PC-9 (cell line): ENCODE measurements at regions of chr7 and their contacts with region 1.

Region 1: DNA sequence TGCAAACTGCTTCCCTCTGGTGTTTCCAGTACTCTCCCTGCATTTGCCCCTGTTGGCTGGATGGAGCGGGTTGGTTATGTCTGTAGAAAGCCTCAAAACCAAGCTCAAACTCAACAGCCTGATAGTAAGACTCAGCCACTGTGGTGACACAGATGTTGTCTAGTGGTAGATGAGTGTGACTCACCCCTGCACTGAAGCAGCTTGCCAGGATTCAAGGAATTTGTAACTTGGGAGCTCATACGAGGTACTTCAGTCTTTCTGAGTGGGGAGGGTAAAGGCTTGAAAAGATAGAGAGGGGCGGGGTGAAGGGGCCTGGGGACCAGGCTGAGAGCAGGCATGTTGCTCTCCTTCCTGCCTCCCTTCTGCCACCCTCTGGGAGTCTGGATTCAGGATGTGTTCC is 22.9 kb upstream of the AQP1 start:
- DNase-seq: peak; percentile 32 to 68
- H3K4me3 ChIP-seq: no peak overlapping the region
- H3K27ac ChIP-seq: no peak overlapping the region
- H3K4me1 ChIP-seq: peaks cover 3% of the 10 kb centered on the region; the same call in 1 of the 2 replicates
- H3K27me3 ChIP-seq: no peaks in the 10 kb centered on the region
- CTCF ChIP-seq: no peak

Region 2: DNA sequence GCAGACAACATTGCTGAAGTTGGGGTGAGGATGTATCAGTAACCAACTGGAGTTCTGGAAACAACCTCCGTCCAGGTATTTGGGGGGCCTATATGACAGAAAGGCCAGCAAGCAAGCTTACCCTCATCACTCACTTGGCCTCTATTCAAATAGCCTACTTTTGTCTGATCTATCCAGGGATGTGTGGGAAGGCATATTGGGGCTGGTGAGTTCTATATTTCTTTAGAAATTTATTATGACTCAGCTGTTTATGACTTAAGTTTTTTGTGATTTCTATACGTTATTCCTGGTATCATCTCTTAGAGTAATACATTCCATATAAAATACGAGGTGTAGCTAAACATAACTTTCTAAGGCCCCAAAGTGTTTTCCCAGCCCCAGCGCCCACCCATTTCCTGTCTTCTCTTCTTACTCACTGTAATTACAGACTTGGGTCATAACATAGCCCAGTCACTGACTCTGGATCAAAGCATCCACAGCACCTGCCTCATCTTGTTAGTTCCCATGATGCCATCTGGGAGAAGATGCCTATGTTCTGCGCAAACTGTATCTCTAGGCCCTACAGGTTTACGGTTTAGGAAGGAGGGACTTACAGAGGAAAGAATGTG is 276.0 kb before region 1 on chr7:
- CTCF ChIA-PET with region 1: no interaction called
- POLR2A ChIA-PET with region 1: no interaction called
- intact Hi-C with region 1: no loop called
- DNase-seq: no peak
- H3K4me3 ChIP-seq: no peak overlapping the region
- H3K27ac ChIP-seq: no peak overlapping the region
- H3K4me1 ChIP-seq: no peaks in the 10 kb centered on the region
- H3K27me3 ChIP-seq: no peaks in the 10 kb centered on the region
- CTCF ChIP-seq: no peak

Region 3: DNA sequence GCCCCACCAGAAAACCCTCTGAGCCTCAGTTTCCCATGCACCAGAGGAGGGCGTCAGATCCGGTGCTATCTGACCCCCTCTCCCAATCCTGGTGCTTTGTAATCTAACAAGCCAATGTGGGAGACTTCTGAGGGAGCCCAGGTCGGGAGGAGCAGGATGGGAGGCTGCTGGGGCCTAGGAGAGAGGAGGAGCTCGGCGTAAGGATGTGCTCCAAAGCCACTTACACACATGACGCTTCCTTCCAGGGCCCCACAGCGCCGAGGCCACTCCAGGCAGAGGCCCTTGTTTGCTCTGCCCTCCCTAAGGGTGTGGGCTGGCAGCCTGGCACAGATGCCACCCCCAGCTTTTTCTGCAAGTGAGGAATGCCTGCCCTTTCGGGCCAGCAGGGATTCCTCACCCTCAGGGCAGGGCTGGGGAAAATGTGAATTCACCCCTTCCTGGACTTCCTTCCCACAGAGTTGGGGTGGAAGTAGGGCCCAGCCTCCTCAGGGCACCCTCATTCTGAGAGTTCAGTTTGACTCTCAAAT is 17.2 kb after region 1 on chr7:
- CTCF ChIA-PET with region 1: no interaction called
- POLR2A ChIA-PET with region 1: interaction called, 4 read pairs
- intact Hi-C with region 1: loop called (anchors 2 kb)
- DNase-seq: peak; percentile 74 to 83
- H3K4me3 ChIP-seq: no peak overlapping the region
- H3K27ac ChIP-seq: no peak overlapping the region
- H3K4me1 ChIP-seq: peaks cover 28% of the 10 kb centered on the region
- H3K27me3 ChIP-seq: no peaks in the 10 kb centered on the region
- CTCF ChIP-seq: no peak